Activated naive CD4-positive, alpha-beta T cell treated with anti-CD3 and anti-CD28 coated beads for 36 hours (primary cell): ENCODE measurements at regions of chr5 and their contacts with region 1.

Region 1: DNA sequence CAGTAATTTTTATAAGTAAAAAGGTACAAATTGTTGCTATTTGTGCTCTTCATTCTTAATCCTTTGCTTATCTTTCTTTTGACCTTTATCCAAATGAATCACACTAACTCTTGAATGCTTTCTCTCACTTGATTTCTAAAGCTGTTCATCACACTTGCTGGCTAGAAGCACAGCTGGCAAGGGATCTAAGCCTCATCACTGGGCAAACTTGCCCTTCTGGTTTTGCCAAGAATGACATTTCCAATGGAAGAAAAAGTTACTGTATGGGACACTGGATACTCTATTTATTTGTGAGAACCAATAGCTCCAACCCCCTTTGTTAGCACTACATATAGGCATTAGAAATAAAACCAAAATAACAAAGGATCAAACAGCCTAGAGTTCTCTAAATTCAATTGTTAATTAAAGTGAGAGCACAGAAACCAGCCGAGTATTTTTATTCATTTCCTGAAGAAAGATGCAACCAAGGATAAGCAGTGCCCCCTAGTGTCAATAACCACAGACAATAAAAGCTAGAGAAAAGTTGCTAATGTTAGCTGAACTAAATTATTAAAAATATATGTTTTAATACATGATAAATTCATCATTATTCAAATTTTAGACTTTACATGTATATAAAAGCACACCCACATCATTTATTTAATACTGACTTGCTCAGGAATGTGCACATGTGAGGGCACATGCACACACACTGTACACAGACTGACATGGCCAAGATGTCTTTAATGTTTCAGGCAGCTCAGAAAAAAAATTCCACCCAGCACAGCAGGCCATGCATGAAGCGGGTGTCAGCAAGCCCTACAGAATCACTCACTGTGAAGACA is 59.8 kb upstream of the POU5F2 start:
- DNase-seq: peak; percentile 34
- H3K4me3 Mint-ChIP-seq: no peak overlapping the region
- H3K27ac Mint-ChIP-seq: no peak overlapping the region
- H3K4me1 Mint-ChIP-seq: peaks cover 2% of the 10 kb centered on the region
- H3K27me3 Mint-ChIP-seq: no peaks in the 10 kb centered on the region

Region 2: GRCh38 chr5:91928754-91929521 is 1872.3 kb before region 1 on chr5:
- CTCF ChIA-PET with region 1: no interaction called
- intact Hi-C with region 1: loop called (anchors 10 kb)
- DNase-seq: no peak
- H3K4me3 Mint-ChIP-seq: no peak overlapping the region
- H3K27ac Mint-ChIP-seq: no peak overlapping the region
- H3K4me1 Mint-ChIP-seq: no peaks in the 10 kb centered on the region
- H3K27me3 Mint-ChIP-seq: no peaks in the 10 kb centered on the region

Region 3: DNA sequence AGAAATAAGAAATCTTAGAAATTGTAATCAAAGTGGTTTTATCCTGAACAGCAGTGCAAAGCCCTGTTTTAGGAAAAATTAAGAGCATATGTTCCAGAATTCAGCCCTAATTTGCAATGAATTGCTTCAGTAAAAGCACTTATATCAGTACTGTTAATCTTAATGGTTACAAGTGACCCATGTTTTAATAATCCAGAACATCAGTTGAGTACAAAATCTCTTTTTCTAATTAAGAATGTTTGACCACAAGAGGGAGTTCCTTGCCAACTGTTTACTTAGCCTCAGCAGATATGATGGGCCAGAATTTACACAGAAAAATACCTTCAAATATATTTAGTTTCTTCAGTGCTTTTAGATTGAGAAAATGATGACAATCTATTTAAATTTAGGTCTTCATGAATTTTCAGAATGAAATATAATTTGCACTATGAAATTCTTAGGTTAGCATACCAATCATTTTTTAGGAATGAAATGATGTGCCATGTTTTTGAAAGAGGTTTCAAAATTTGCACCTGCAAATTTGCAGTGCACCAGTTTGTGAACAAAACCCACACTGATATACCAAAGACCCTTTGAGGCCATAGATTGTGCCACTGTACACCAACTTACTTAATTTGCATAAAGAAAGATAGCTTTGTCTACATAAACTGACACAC is 1491.7 kb before region 1 on chr5:
- CTCF ChIA-PET with region 1: no interaction called
- intact Hi-C with region 1: loop called (anchors 5 kb)
- DNase-seq: no peak
- H3K4me3 Mint-ChIP-seq: no peak overlapping the region
- H3K27ac Mint-ChIP-seq: no peak overlapping the region
- H3K4me1 Mint-ChIP-seq: no peaks in the 10 kb centered on the region
- H3K27me3 Mint-ChIP-seq: no peaks in the 10 kb centered on the region

Region 4: GRCh38 chr5:93607367-93608258 is 193.6 kb before region 1 on chr5:
- CTCF ChIA-PET with region 1: interaction called, 16 read pairs
- intact Hi-C with region 1: loop called (anchors 1 kb)
- DNase-seq: peak; percentile 58
- H3K4me3 Mint-ChIP-seq: no peak overlapping the region
- H3K27ac Mint-ChIP-seq: no peak overlapping the region
- H3K4me1 Mint-ChIP-seq: peaks cover 6% of the 10 kb centered on the region
- H3K27me3 Mint-ChIP-seq: peaks cover 67% of the 10 kb centered on the region

Region 5: DNA sequence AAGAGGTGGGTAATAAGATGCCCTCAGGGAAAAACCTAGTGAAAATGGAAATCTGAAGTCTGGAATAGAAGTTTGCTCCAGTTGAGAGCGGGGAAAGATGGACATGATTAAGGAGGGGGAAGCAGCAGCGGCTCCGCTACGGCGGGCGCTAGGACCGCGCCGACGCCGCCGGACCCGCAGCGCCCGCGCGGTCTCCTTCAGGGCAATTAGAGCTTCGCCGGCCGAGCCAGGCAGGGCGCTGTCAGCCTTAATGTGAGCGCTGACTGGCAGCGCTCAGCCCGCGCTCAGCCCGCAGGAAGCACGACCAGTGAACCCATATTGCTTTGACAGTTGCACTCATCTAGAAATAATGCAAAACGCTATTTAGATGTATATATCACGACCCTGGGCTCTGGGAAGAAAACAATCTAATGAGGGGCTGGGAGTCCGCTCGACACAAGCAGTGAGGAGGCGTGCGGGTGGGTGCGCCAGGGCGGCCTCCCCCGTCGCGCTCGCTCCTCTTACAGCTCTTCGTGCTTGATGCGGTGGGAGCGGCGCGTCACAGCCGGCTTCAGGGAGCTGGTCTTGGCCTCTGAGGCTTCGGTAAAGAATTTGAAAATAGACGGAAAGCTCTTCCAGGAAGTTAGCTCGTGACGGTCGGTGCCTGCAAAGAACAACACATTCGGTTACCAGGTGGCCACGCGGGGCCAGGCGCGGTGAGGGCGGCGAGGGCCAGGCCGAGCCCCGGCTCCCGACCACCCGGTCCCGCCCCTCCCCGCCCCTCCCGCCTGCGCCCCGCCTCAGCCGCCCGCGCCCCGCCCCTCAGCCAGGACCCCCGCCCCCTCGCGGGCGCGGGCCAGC is 180.5 kb before region 1 on chr5:
- CTCF ChIA-PET with region 1: interaction called, 14 read pairs
- intact Hi-C with region 1: no loop called
- DNase-seq: peak; percentile 64
- H3K4me3 Mint-ChIP-seq: peak overlapping the region; percentile 76
- H3K27ac Mint-ChIP-seq: no peak overlapping the region
- H3K4me1 Mint-ChIP-seq: peaks cover 24% of the 10 kb centered on the region
- H3K27me3 Mint-ChIP-seq: peaks cover 43% of the 10 kb centered on the region

Region 6: DNA sequence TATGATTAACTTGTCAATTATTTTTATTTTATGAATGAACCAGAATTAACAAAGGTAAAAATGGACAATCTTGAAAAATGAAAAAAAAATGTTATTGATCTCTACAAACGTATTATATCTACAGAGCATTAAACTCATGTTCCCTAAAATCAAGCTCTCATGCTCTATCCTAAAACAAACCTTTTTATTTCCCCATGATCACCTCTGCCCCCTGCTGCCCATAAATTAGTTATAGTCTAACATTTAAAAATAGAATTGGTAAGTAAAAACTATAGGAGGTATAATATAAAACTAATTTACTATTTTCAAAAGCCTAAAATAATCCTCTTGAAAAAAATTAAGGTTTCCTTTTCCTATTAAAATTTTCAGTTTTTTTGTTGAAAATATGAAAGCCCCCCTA is 108.2 kb after region 1 on chr5:
- CTCF ChIA-PET with region 1: interaction called, 4 read pairs
- intact Hi-C with region 1: loop called (anchors 5 kb)
- DNase-seq: peak; percentile 4
- H3K4me3 Mint-ChIP-seq: no peak overlapping the region
- H3K27ac Mint-ChIP-seq: no peak overlapping the region
- H3K4me1 Mint-ChIP-seq: no peaks in the 10 kb centered on the region
- H3K27me3 Mint-ChIP-seq: no peaks in the 10 kb centered on the region

Region 7: GRCh38 chr5:94849821-94850736 is 1048.9 kb after region 1 on chr5:
- CTCF ChIA-PET with region 1: no interaction called
- intact Hi-C with region 1: loop called (anchors 10 kb)
- DNase-seq: peak; percentile 40
- H3K4me3 Mint-ChIP-seq: no peak overlapping the region
- H3K27ac Mint-ChIP-seq: no peak overlapping the region
- H3K4me1 Mint-ChIP-seq: peaks cover 3% of the 10 kb centered on the region
- H3K27me3 Mint-ChIP-seq: peaks cover 6% of the 10 kb centered on the region